ENCODE measurements at regions of chr10 and their contacts with region 1.

Region 1: DNA sequence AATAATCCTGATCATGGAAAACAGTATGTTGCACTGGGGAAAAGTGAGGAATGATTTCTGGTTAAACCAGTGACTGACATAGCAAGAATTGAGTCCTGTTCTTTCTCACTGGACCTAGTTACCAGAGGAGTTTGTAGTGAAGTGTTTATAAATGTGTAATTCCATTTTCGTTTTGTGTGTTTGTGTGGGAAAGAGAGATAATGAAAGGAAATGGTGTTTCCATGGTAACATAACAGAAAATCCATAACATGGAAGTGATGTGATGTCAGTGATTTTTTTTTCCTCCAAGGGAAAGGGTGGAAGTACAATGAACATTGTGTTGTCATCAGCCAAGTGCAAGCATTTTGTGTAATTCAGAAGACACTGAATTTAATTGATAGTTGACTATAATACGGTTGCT is 283.9 kb downstream of the PLXDC2 start:
- H3K4me3 Mint-ChIP-seq: no peak overlapping the region
- H3K27ac Mint-ChIP-seq: no peak overlapping the region
- H3K4me1 Mint-ChIP-seq: peaks cover 22% of the 10 kb centered on the region
- H3K27me3 Mint-ChIP-seq: no peaks in the 10 kb centered on the region

Region 2: DNA sequence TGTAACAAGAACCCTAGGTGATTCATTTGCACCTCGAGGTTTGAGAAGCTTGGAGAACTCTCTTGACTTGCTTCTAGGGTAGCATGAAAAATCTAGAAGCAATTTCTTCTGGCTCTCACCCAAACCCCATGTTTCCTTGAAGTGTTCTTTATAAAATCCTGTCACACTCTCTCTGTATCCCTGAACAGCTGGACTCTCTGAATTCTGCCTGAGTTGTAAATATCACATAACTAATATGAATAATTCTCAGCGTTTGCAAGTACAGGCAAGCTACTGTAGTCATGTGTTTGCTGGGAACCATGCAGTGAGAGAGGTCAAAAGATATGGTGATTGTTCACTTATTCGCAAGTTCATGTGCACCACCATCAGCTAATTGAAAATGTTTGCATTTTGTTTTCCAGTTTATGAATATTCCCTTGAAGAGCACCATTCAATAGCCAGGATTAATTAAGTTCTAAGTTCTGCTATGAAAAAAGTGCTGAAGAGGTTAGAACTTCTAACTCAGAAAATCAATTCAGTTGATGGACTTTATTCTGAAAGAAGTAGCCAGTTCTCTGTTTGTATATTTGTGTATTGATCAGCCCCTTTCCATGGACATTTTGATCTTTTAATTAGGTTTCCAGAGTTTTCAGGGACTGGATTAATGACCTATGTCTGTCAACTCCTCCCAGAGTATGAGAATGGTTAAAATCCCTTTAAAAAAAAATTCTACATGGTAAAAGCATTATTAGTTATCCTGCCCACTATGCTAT is 40.9 kb before region 1 on chr10:
- intact Hi-C with region 1: no loop called
- H3K4me3 Mint-ChIP-seq: no peak overlapping the region
- H3K27ac Mint-ChIP-seq: no peak overlapping the region
- H3K4me1 Mint-ChIP-seq: peaks cover 11% of the 10 kb centered on the region
- H3K27me3 Mint-ChIP-seq: no peaks in the 10 kb centered on the region

Region 3: DNA sequence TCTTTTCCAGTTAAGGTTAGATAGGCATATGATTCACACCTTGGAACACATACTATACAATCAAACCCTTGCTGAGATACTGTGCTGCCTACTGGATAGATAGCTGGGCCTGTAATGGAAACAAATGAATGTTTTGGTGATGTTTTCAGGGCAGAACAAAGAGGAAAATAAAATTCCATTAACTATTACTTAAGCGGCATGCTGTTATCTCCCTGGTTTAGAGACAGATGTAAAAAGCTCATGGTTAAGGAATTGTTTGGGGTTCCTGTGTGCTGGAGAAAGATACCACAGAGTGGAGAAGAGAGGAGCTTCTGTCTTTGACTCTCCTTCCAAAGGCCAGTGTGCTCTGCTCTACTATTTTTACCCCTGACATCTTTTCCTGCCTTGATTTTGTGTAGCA is 57.1 kb after region 1 on chr10:
- intact Hi-C with region 1: loop called (anchors 10 kb)
- H3K4me3 Mint-ChIP-seq: no peak overlapping the region
- H3K27ac Mint-ChIP-seq: no peak overlapping the region
- H3K4me1 Mint-ChIP-seq: peaks cover 37% of the 10 kb centered on the region
- H3K27me3 Mint-ChIP-seq: no peaks in the 10 kb centered on the region

Measured in dendritic cell treated with granulocyte-macrophage colony-stimulating factor and Interleukin-4, amounts not matched to agents 40 ng/mL and 50 ng/mL, for 4 days (primary cell).